CD8-positive, alpha-beta T cell (primary cell): ENCODE measurements at regions of chr14 and their contacts with region 1.

Region 1: GRCh38 chr14:61461808-61462275 is 140.5 kb downstream of the PRKCH start:
- DNase-seq: peak in 5 of 9 experiments; percentile 27 to 81 (median 49)
- ATAC-seq: peak; percentile 53
- H3K4me3 ChIP-seq: no peak overlapping the region
- H3K4me3 Mint-ChIP-seq: peak overlapping the region; percentile 37
- H3K27ac ChIP-seq: peak overlapping the region; percentile 0 to 61
- H3K27ac Mint-ChIP-seq: peak overlapping the region; percentile 97
- H3K4me1 ChIP-seq: peaks cover 30% of the 10 kb centered on the region
- H3K4me1 Mint-ChIP-seq: peaks cover 70% of the 10 kb centered on the region
- H3K27me3 ChIP-seq: no peaks in the 10 kb centered on the region
- H3K27me3 Mint-ChIP-seq: no peaks in the 10 kb centered on the region
- CTCF ChIP-seq: peak; percentile 89

Region 2: GRCh38 chr14:61388173-61388975 is 73.5 kb before region 1 on chr14:
- CTCF ChIA-PET with region 1: interaction called, 10 read pairs
- POLR2A ChIA-PET with region 1: no interaction called
- intact Hi-C with region 1: no loop called
- DNase-seq: peak in 4 of 9 experiments; percentile 43 to 81 (median 54)
- ATAC-seq: peak; percentile 69
- H3K4me3 ChIP-seq: peak overlapping the region; percentile 32 to 46
- H3K4me3 Mint-ChIP-seq: no peak overlapping the region
- H3K27ac ChIP-seq: peak overlapping the region; percentile 53 to 90
- H3K27ac Mint-ChIP-seq: no peak overlapping the region
- H3K4me1 ChIP-seq: peaks cover 98% of the 10 kb centered on the region
- H3K4me1 Mint-ChIP-seq: no peaks in the 10 kb centered on the region
- H3K27me3 ChIP-seq: no peaks in the 10 kb centered on the region
- H3K27me3 Mint-ChIP-seq: no peaks in the 10 kb centered on the region
- CTCF ChIP-seq: no peak

Region 3: DNA sequence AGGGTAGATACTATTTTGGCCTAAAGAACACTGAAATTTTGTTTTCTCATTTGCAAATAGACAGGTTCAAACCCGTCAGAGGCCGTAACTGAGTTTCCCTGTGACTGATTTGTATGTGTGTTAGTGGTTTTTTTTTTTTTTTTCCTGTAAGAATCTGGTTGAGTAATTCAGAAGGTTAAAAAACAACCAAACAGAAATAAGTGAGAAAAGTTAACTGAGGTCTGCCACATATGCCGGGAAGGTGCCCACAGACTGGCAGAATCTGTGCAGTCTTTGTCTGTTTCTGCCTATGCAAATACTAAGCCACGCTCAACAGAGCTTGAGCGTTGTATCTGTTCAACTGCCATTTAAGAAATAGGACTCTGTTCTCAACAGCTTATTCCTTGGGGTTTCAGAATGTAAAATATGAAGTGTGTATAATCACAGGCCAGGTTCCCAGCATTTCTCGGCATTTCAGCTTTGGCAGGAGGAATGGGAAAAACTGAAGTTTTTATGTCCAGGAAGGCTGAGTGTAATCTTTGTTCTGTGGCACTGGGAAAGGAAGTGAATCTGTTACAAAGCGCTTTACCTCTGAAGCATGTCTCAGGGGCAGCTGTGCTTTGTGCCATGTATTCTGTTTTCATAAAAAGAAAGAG is 41.4 kb after region 1 on chr14:
- CTCF ChIA-PET with region 1: no interaction called
- POLR2A ChIA-PET with region 1: no interaction called
- intact Hi-C with region 1: loop called (anchors 5 kb)
- DNase-seq: peak; percentile 28 to 88 (median 64)
- ATAC-seq: peak; percentile 85
- H3K4me3 ChIP-seq: no peak overlapping the region
- H3K4me3 Mint-ChIP-seq: peak overlapping the region; percentile 71
- H3K27ac ChIP-seq: peak overlapping the region; percentile 28 to 61
- H3K27ac Mint-ChIP-seq: peak overlapping the region; percentile 98
- H3K4me1 ChIP-seq: peaks cover 97% of the 10 kb centered on the region
- H3K4me1 Mint-ChIP-seq: peaks cover 96% of the 10 kb centered on the region
- H3K27me3 ChIP-seq: no peaks in the 10 kb centered on the region
- H3K27me3 Mint-ChIP-seq: no peaks in the 10 kb centered on the region
- CTCF ChIP-seq: no peak

Region 4: DNA sequence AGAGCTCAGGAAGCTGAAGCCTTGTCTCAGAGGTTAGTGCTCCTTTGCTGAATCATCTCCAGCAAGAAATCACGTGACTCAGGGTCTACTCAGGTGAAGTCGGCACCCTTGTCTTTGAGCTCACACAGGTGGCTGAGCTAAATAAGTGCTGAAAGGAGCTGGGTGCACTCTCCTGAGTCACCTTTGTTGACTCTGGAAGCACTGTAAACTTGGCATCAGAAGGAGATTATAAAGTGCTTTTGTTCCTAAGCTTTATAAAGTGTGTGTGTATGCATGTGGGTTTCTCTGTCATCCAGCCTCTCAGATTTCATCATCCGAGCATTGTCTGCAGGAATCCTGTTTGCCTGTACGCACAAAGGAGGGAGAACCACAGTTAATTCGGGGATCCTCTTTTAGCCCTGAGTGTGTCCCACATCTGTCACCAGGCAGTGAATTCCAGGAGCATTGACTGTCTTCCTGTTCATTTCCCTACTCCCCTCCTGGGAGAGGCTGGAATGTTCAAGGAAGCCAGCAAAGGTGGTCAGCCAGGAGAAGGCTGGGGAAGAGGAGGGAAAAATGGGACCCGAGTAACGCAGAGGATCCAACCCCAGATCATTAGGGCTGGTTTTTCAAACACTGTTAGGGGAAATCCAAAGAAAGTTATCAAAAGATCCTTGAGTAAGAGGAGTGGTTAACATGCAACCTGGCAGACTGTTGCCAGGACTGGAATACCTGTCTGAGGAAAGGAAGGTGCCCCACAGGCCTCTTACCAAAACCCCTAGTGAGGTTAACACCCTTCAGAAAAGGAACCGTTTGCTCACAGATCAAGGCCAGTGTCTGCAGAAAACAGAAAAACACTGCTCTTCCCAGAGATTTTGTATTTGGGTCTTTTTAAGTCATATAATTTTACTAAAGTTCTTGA is 76.0 kb after region 1 on chr14:
- CTCF ChIA-PET with region 1: interaction called, 4 read pairs
- POLR2A ChIA-PET with region 1: no interaction called
- intact Hi-C with region 1: loop called in 1 of 2 experiments (anchors 5 kb)
- DNase-seq: peak in 4 of 9 experiments; percentile 31 to 46 (median 40)
- ATAC-seq: peak; percentile 48
- H3K4me3 ChIP-seq: no peak overlapping the region
- H3K4me3 Mint-ChIP-seq: no peak overlapping the region
- H3K27ac ChIP-seq: peak overlapping the region in 1 of 2 experiments; percentile 44
- H3K27ac Mint-ChIP-seq: peak overlapping the region; percentile 87
- H3K4me1 ChIP-seq: no peaks in the 10 kb centered on the region
- H3K4me1 Mint-ChIP-seq: peaks cover 51% of the 10 kb centered on the region
- H3K27me3 ChIP-seq: no peaks in the 10 kb centered on the region
- H3K27me3 Mint-ChIP-seq: no peaks in the 10 kb centered on the region
- CTCF ChIP-seq: no peak

Region 5: GRCh38 chr14:62126879-62127478 is 665.1 kb after region 1 on chr14:
- CTCF ChIA-PET with region 1: no interaction called
- POLR2A ChIA-PET with region 1: no interaction called
- intact Hi-C with region 1: loop called (anchors 5 to 10 kb)
- DNase-seq: peak in 2 of 9 experiments; percentile 59 to 70
- ATAC-seq: peak; percentile 69
- H3K4me3 ChIP-seq: no peak overlapping the region
- H3K4me3 Mint-ChIP-seq: no peak overlapping the region
- H3K27ac ChIP-seq: no peak overlapping the region
- H3K27ac Mint-ChIP-seq: no peak overlapping the region
- H3K4me1 ChIP-seq: no peaks in the 10 kb centered on the region
- H3K4me1 Mint-ChIP-seq: no peaks in the 10 kb centered on the region
- H3K27me3 ChIP-seq: peaks cover 0 to 2% of the 10 kb centered on the region in 2 experiments
- H3K27me3 Mint-ChIP-seq: peaks cover 29% of the 10 kb centered on the region
- CTCF ChIP-seq: peak; percentile 79